ENCODE measurements at regions of chr5 and their contacts with region 1.

Region 1: DNA sequence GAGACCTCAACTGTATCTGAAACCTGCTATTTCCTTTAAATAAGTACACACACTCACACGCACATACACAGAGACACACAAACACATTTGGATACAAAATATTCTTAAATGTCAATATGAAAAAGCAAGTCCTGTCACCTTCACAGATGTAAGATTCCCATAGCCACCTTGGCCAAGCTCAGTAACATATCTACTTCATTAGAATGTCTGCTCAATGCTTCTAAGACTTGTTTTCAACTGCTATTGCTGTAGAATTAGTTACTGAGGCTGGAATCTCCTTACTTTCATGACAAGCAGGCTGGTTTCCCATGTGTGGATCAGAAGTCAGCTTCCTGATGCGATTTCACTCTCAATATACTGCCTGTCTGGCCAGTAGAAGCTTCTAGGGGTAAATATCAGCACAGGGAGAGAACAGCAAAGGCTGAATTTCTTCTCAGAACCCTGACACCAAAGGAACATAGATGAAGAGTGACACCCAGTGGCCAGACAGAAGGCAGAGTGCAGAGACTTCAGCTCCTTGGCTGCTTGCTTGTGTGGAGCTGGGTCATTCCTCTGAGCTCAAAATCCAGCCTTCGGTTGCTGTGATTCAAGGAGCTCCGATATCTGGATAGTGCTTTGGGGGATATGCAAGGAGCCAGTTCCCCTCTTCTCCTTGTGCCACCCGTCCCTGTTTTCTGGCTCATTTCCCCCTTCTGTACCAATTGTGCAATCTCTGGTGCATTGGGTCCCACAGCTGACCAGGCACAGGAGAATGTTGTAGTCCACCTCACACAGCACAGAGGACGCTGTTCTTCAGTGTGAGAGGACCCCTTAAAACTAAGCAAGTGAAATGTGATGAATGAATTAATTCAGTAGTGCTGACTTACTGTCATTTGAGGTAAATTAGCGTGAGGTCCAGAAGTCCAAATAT is 26.6 kb upstream of the ABLIM3 start:
- DNase-seq: no peak

Region 2: DNA sequence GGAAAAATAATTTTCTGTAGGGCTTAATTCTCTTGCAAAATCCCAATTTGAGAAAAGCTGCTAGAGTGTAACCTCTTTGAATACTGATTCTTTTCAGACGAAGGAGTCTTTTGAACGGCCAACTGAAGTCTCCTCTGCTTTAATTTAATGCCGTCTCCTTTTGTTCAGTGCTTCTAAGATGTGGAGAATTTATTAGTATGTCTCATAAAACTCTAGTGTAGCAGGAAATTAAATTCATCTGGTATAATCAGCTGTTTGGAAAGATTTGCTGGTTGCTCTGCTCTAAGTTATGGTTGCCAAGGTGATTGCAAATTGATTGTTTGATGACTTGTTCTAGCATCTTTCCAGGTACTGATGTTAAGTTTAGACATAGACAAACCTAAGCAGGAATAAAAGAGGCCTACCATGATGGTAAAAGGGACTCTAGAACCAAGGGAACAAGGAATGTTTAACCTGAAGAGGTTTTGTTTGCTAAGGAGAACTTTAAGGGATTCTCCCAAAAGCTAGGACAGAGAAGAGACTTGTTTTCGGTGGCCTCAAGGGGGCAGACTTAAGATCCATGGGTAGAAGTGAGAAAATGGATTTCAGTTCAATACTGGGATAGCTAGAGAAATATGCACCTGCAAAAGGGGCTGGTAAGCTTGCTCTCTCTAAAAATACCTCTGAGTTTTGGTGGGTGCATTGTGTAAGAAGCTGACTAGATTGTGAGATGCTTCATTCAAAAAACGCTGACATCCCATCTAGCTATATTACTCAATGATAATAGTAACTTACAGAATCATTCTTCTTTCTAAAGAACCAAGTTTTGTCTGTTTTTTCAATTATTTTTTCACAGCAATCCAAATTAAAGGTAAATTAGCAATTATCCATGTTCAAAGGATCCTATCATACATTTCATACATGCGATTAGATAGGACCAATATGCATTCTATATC is 293.9 kb before region 1 on chr5:
- intact Hi-C with region 1: loop called (anchors 5 kb)
- DNase-seq: no peak

Region 3: DNA sequence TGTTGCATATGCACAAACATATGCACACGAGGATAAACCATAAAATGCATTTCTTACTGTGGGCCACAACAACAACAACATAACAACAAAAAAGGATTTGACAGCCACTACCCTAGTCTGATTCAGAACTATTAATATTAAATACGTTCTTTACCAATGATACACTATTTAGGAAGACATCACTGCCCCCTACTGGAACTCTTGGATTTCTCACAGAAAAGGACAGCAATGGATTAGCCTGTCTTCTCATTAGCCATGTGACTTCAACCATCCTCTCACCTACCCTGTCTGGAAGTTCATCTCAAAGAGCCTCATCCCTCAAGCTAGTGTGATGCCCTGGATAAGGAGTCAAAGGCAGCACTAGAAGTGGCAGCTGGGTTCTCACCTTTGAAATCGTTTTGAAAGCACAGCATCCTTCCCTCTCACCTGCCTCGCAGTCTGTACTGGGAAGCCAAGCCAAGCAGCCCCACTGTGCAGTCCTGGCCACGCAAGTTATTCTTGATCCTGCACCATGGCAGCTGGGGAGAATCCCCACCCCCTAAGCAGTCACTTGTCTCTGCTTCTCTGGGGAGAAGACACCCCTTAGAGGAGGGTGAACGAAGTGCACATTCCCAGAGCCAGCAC is 116.4 kb before region 1 on chr5:
- intact Hi-C with region 1: loop called (anchors 5 kb)
- DNase-seq: no peak

Region 4: DNA sequence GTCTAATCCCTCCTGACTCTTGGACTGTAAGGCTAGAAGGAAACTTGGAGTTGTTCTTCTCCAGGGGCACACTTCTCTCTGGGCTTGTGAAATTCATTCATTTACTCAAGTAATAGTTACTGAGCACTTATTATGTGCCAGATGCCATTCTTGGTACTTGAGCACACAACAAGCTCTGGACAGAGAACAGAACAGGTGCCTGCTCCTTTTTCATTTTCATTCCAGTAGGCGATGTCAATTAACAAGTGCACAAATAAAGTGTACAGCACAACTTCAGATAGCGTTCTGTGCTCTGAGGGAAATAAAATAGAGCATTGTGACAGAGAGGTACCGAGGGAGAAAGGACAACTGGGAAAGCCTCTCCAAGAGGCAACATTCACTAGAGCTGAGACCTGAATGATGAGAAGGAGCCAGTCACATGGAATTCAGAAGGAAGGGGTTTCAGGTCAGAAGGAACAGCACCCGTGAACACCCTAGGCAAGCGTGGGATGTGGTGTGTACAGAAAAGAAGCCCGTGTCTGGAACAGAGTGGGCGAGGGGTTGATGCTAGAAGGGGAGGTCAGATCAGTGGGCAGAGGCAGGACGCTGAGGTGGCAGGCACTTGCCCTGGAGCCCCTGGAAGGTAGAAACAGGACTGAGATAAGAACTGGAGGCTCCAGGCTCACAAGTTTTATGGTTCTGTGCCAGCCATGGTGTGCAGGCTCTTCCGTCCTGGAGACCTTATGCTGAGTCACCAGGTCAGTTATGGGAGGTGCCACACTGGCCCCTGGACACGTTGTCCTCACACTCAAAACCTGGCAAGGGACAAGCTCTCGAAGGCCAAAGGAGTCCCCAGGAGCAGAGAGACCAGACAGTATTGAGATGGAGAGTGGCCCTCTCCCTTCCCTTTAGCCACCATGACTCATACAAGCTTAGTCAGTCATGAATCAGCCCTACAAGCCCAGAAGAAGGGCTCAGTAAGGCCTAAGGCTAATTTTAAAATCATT is 19.4 kb after region 1 on chr5:
- intact Hi-C with region 1: no loop called
- DNase-seq: peak; percentile 81

Measured in cardiac septum (tissue), 1 donor.